Prostate gland (tissue), 2 donors: ENCODE measurements at regions of chr11 and their contacts with region 1.

Region 1: GRCh38 chr11:96342961-96343711 is at the start of gene MAML2:
- DNase-seq: peak; percentile 95
- H3K4me3 ChIP-seq: peak within 1 kb of the TSS; percentile 60 to 62
- H3K27ac ChIP-seq: peak within 1 kb of the TSS; percentile 80 to 85
- H3K4me1 ChIP-seq: peaks cover 10% of the 10 kb centered on the region
- H3K27me3 ChIP-seq: no peaks in the 10 kb centered on the region
- CTCF ChIP-seq: peak; percentile 88 to 97 (median 92)
- POLR2A ChIP-seq: no peak
- total RNA-seq, gene MAML2: 28.9 to 30.4 TPM

Region 2: GRCh38 chr11:95849087-95849825 is 493.9 kb before region 1 on chr11:
- intact Hi-C with region 1: loop called (anchors 5 kb)
- DNase-seq: peak; percentile 49
- H3K4me3 ChIP-seq: no peak overlapping the region
- H3K27ac ChIP-seq: no peak overlapping the region
- H3K4me1 ChIP-seq: no peaks in the 10 kb centered on the region
- H3K27me3 ChIP-seq: no peaks in the 10 kb centered on the region
- CTCF ChIP-seq: peak in 3 of 4 experiments; percentile 42 to 59 (median 55)
- POLR2A ChIP-seq: no peak

Region 3: GRCh38 chr11:96012086-96012824 is 330.9 kb before region 1 on chr11:
- intact Hi-C with region 1: loop called (anchors 5 kb)
- DNase-seq: peak; percentile 42
- H3K4me3 ChIP-seq: no peak overlapping the region
- H3K27ac ChIP-seq: peak overlapping the region in 1 of 2 donors; percentile 29
- H3K4me1 ChIP-seq: no peaks in the 10 kb centered on the region
- H3K27me3 ChIP-seq: no peaks in the 10 kb centered on the region
- CTCF ChIP-seq: peak in 3 of 4 experiments; percentile 40 to 54 (median 52)
- POLR2A ChIP-seq: no peak

Region 4: DNA sequence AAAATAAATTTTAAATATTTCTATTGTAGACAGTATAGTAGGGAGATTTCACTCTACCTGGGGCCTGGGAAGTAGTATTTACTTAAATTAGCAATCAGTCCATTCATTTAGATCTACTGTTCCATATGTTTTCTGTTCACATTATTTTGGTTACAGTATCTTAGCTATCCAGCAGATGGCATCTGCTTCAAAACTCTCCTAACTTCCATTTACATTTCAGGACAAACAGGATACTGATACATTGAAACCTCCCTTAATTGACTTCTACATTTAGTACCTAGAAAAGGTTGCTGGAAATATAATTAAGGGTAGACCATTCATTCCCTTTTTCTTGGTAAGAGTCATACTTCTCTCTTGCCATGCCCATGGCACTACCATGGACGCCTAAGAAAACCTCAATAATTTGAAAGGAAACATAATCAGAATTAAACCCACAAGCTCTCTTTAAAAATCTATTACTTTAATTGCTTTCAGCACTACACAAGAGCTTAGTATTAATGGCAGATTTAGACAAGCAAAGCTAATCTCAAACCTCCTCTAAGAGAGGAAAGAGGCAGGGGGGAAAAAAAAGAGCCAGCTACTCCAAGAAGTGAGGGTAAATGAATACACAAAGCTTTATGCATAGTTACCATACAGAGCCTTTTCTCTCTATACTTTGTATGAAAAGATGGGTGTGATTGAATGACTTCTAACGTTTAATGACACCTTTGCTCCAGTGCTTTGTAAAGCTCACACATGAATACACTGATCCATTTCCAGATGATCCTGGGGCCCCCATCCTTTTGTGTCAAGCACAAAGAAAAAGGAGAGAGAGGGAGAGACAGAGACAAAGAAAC is 288.0 kb before region 1 on chr11:
- intact Hi-C with region 1: loop called (anchors 2 kb)
- DNase-seq: no peak
- H3K4me3 ChIP-seq: no peak overlapping the region
- H3K27ac ChIP-seq: peak overlapping the region in 1 of 2 donors; percentile 5
- H3K4me1 ChIP-seq: peaks cover 3% of the 10 kb centered on the region
- H3K27me3 ChIP-seq: no peaks in the 10 kb centered on the region
- CTCF ChIP-seq: peak; percentile 26 to 86 (median 78)
- POLR2A ChIP-seq: no peak

Region 5: GRCh38 chr11:96228473-96228891 is 114.7 kb before region 1 on chr11:
- intact Hi-C with region 1: loop called (anchors 5 kb)
- DNase-seq: peak; percentile 84
- H3K4me3 ChIP-seq: no peak overlapping the region
- H3K27ac ChIP-seq: peak overlapping the region; percentile 22 to 36
- H3K4me1 ChIP-seq: no peaks in the 10 kb centered on the region
- H3K27me3 ChIP-seq: no peaks in the 10 kb centered on the region
- CTCF ChIP-seq: no peak
- POLR2A ChIP-seq: no peak